GM12878 (cell line): ENCODE measurements at regions of chr1 and their contacts with region 1.

Region 1: DNA sequence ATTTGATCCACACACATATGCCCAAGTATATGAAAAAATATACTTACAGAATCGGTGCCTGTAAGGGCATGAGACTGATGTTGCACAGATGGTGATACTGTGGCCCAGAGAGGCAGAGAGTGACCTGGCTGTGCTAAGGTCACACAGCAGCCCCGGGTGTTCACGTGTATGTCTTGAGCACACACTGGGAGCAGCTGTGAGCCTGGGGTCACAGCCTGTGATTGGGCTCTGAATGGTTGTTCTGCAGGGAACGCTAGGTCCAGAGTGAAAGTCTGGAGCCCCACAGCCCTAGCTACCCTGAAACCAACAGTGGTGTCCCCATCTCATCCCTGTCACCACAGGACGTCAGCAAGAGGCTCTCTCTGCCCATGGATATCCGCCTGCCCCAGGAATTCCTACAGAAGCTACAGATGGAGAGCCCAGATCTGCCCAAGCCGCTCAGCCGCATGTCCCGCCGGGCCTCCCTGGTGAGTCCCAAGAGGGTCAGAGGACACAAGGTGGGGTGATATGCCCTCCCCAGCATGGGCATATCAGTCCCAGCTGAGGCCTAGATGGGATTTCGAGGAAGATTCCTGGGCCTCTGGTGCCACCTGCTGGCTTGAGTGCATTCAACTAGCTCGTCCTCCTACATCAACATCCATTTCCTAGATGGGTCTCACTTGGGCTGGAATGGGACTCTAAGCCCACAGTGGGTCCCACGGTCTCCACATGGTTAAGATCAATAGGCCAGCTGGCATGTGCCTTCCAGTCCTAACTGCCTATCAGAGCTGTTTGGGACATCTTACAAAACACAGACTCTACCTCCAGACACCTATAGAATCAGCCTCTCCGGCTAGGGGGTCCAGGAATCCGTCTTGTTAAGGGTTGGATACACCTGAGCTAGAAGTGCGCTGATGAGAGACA is 19.7 kb downstream of the CDK18 start:
- DNase-seq: no peak
- ATAC-seq: peak; percentile 80
- H3K4me3 ChIP-seq: no peak overlapping the region
- H3K27ac ChIP-seq: no peak overlapping the region
- H3K4me1 ChIP-seq: no peaks in the 10 kb centered on the region
- H3K27me3 ChIP-seq: peaks cover 0 to 1% of the 10 kb centered on the region in 2 experiments; a peak in 3 of 4 replicates
- CTCF ChIP-seq: peak; percentile 75 to 85 (median 77)
- EP300 ChIP-seq: no peak
- POLR2A ChIP-seq: no peak
- RAD21 ChIP-seq: peak; percentile 79

Region 2: DNA sequence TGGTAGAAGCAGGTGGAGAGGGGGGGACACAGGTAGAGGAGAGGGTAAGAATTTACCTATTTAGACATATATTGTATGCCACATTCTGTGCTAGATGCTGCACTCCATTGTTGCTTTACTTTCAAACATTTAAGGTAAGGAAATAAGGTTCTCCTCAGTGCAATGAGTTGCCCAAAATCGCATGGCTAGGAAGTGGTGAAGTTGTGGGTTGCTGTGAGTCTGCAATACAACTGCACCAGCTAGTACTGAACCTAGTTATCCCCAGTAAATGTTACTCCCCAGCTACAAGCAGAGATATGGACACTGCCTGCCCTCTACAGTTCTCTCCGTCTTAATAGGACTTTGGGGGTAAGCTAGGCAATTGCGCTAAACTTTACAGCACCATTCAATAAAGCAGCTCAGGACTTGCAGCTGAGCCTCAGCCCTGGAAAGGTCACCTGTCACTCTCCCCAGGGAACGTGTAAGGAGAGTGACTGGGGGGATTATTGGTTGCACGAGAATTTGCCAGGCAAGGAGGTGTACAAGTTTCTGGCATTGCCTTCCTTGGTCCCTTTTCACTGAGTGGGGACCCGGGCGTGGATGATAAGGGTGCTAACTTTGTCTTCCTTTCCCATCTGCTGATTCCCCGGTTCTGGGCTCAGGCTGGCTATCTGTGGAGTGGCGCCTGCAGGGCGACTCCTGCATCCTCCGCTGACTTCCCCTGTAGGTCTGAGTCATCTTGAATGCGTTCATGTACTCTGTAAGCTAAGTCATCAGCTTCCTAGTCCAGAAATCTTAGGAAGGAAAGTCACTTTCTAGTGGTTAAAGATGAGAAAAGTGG is 552.4 kb before region 1 on chr1:
- CTCF ChIA-PET with region 1: no interaction called
- POLR2A ChIA-PET with region 1: no interaction called
- RAD21 ChIA-PET with region 1: no interaction called
- SMC1A ChIA-PET with region 1: no interaction called
- in situ Hi-C with region 1: no loop called
- intact Hi-C with region 1: no loop called
- DNase-seq: no peak
- ATAC-seq: no peak
- H3K4me3 ChIP-seq: no peak overlapping the region
- H3K27ac ChIP-seq: no peak overlapping the region
- H3K4me1 ChIP-seq: no peaks in the 10 kb centered on the region
- H3K27me3 ChIP-seq: peaks cover 1 to 5% of the 10 kb centered on the region in 2 experiments; a peak in 2 of 4 replicates
- CTCF ChIP-seq: no peak
- EP300 ChIP-seq: no peak
- POLR2A ChIP-seq: no peak
- RAD21 ChIP-seq: no peak

Region 3: DNA sequence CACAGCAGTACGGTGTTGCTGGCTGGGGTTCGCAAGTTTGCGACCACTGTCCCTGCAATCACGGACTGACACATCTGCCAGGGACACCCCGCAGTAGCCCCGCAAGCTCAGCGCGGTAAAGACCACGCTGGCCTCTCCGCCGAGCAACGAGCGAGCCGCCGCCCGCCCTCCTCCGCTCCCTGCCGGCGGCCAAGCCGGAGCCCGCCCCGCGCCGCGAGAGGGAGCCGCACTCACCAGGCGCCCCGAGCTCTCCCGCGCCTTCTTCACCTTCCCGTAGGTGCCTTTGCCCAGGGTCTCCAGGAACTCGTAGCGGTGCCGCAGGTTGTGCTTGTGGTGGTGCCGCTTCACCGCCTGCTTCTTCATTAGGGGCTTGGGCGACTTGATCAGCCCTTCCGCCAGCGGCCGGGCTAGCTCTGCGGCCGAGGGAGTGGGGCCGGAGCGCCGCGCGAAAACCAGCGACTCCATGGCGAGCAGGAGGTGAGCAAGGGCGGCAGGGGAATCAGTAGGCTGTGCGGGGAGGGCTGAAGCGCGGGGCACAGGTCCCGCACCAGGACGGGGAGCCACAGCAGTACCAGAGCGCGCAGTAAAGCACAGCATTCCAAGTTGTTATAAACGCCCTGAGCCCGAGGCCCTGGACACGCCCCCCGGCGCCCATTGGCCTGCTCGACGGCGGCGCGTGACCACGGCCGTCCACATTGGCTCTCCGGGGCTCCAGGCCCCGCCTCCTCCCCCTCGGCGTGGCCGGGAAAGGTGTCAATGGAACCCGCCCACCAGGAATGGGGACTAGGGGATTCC is 202.8 kb before region 1 on chr1 and contains the start of gene NUAK2:
- CTCF ChIA-PET with region 1: interaction called, 14 read pairs
- POLR2A ChIA-PET with region 1: interaction called, 3 read pairs
- RAD21 ChIA-PET with region 1: interaction called, 9 read pairs
- SMC1A ChIA-PET with region 1: interaction called, 9 read pairs
- in situ Hi-C with region 1: no loop called
- intact Hi-C with region 1: no loop called
- DNase-seq: no peak
- ATAC-seq: peak; percentile 85
- H3K4me3 ChIP-seq: peak within 1 kb of the TSS; percentile 36; the same call in 1 of the 2 replicates
- H3K27ac ChIP-seq: no peak within 1 kb of the TSS
- H3K4me1 ChIP-seq: peaks cover 13% of the 10 kb centered on the region
- H3K27me3 ChIP-seq: peaks cover 0 to 8% of the 10 kb centered on the region in 2 experiments; a peak in 3 of 4 replicates
- CTCF ChIP-seq: peak in 1 of 3 experiments; percentile 21; a peak in 1 of 6 replicates
- EP300 ChIP-seq: no peak
- POLR2A ChIP-seq: peak; percentile 44; the same call in 1 of the 2 replicates
- RAD21 ChIP-seq: peak; percentile 9; the same call in 1 of the 2 replicates
- polyA plus RNA-seq, gene NUAK2: 0.27 to 0.31 TPM

Region 4: DNA sequence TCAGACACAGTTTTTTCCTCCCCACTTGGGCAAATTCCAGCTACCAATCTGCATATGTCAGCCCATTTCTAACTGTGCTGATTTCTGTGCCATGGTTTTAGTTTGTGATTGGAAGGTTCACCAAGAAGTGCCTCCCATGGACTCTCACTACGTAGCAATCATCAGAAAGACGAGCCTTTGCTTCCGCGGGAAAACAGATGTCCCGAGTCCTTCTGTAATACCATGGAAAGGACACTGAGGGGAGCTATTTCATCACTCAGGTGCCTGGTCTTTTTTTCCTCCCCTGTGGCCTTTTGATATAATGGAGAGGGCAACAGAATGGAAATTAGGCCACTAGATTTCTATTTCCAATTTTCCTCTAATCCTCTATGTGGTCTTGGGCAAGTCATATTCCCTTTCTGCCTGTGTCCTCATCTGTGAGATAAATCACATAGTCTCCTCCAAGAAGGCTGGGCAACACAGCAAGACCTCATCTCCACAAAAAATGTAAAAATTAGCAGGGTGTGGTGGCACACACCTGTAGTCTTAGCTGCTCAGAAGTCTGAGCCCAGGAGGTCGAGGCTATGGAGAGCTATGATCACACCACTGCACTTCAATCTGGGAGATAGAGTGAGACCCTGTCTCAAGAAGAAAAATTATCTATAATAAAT is 127.0 kb before region 1 on chr1:
- CTCF ChIA-PET with region 1: interaction called, 116 read pairs
- POLR2A ChIA-PET with region 1: no interaction called
- RAD21 ChIA-PET with region 1: interaction called, 70 read pairs
- SMC1A ChIA-PET with region 1: interaction called, 65 read pairs
- in situ Hi-C with region 1: loop called (anchors 5 kb)
- intact Hi-C with region 1: loop called (anchors 1 kb)
- DNase-seq: peak; percentile 8
- ATAC-seq: peak; percentile 65
- H3K4me3 ChIP-seq: no peak overlapping the region
- H3K27ac ChIP-seq: no peak overlapping the region
- H3K4me1 ChIP-seq: no peaks in the 10 kb centered on the region
- H3K27me3 ChIP-seq: no peaks in the 10 kb centered on the region
- CTCF ChIP-seq: peak; percentile 62 to 65 (median 65)
- EP300 ChIP-seq: no peak
- POLR2A ChIP-seq: no peak
- RAD21 ChIP-seq: peak; percentile 85

Region 5: GRCh38 chr1:205440476-205441317 is 83.4 kb before region 1 on chr1:
- CTCF ChIA-PET with region 1: interaction called, 11 read pairs
- POLR2A ChIA-PET with region 1: no interaction called
- RAD21 ChIA-PET with region 1: interaction called, 3 read pairs
- SMC1A ChIA-PET with region 1: interaction called, 3 read pairs
- in situ Hi-C with region 1: no loop called
- intact Hi-C with region 1: no loop called
- DNase-seq: peak; percentile 47
- ATAC-seq: peak; percentile 92
- H3K4me3 ChIP-seq: peak overlapping the region; percentile 60; the same call in 1 of the 2 replicates
- H3K27ac ChIP-seq: peak overlapping the region; percentile 59
- H3K4me1 ChIP-seq: peaks cover 20% of the 10 kb centered on the region
- H3K27me3 ChIP-seq: no peaks in the 10 kb centered on the region; a peak in 1 of 4 replicates
- CTCF ChIP-seq: no peak
- EP300 ChIP-seq: no peak
- POLR2A ChIP-seq: peak; percentile 55; the same call in 1 of the 2 replicates
- RAD21 ChIP-seq: no peak

Region 6: DNA sequence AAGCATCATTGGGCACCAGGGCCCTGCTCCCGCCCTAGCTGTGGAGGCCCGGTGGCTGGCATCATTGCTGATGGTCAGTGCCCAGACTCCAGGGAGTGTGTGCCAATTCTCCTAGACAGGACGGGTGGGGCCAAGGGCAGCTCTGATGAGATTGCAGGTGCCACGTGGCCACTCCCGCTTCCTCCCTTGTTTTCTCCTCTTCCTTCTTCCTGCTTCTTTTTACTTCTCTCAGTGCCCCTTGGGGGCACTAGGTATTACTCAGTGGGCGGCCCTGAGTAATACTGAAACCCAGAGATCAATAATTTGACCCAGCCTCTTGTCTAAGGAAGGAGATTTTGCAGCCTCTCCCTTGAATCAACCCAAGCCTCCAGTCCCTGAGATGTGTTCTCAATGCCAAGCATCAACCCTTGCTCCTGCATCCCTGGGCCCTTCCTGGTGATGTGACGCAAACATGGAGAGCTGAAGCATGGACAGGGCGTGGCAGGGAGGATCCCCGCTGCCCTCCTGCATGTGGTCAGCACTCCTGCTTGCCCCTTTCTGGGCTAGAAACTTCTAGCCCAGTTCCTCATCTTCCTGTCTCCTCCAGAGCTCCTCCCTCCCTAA is 12.7 kb after region 1 on chr1:
- CTCF ChIA-PET with region 1: interaction called, 17 read pairs
- POLR2A ChIA-PET with region 1: no interaction called
- RAD21 ChIA-PET with region 1: interaction called, 7 read pairs
- SMC1A ChIA-PET with region 1: interaction called, 3 read pairs
- in situ Hi-C with region 1: no loop called
- intact Hi-C with region 1: no loop called
- DNase-seq: no peak
- ATAC-seq: peak; percentile 67
- H3K4me3 ChIP-seq: no peak overlapping the region
- H3K27ac ChIP-seq: no peak overlapping the region
- H3K4me1 ChIP-seq: no peaks in the 10 kb centered on the region
- H3K27me3 ChIP-seq: peaks cover 0 to 3% of the 10 kb centered on the region in 2 experiments; a peak in 2 of 4 replicates
- CTCF ChIP-seq: no peak
- EP300 ChIP-seq: no peak
- POLR2A ChIP-seq: no peak
- RAD21 ChIP-seq: no peak

Region 7: GRCh38 chr1:205711104-205712020 is 187.2 kb after region 1 on chr1:
- CTCF ChIA-PET with region 1: interaction called, 15 read pairs
- POLR2A ChIA-PET with region 1: no interaction called
- RAD21 ChIA-PET with region 1: interaction called, 7 read pairs
- SMC1A ChIA-PET with region 1: interaction called, 7 read pairs
- in situ Hi-C with region 1: no loop called
- intact Hi-C with region 1: loop called (anchors 1 kb)
- DNase-seq: peak; percentile 62
- ATAC-seq: peak; percentile 99
- H3K4me3 ChIP-seq: no peak overlapping the region
- H3K27ac ChIP-seq: no peak overlapping the region
- H3K4me1 ChIP-seq: no peaks in the 10 kb centered on the region
- H3K27me3 ChIP-seq: no peaks in the 10 kb centered on the region
- CTCF ChIP-seq: peak; percentile 77 to 95 (median 92)
- EP300 ChIP-seq: no peak
- POLR2A ChIP-seq: no peak
- RAD21 ChIP-seq: peak; percentile 91